KBM-7 (cell line): ENCODE measurements at regions of chr16 and their contacts with region 1.

Region 1: GRCh38 chr16:17529982-17530765 is 59.4 kb upstream of the XYLT1 start:
- DNase-seq: no peak

Region 2: DNA sequence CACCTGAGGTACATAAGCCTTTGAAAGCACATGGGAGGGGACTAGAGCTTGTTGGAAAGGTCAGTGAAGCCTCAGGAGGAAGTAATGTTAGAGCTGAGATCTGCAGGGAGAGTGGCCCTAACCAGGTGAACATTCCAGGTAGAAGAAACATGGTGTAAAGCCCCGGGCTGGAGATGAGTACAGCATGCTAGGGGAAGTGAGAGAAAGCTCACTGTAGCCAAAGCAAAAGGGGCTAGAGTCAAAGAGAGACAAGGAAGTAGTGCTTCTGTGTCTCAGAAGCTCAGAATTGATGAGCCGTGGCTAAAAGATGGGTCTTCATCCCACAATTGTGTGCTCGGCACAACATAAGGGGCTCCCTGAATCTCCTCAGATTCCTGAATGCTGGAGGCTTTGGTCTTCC is 541.2 kb before region 1 on chr16:
- in situ Hi-C with region 1: no loop called
- DNase-seq: no peak

Region 3: GRCh38 chr16:17448640-17449638 is 81.2 kb before region 1 on chr16:
- in situ Hi-C with region 1: loop called (anchors 25 kb)
- DNase-seq: peak; percentile 43